Endothelial cell of umbilical vein (primary cell): ENCODE measurements at regions of chr6 and their contacts with region 1.

Region 1: DNA sequence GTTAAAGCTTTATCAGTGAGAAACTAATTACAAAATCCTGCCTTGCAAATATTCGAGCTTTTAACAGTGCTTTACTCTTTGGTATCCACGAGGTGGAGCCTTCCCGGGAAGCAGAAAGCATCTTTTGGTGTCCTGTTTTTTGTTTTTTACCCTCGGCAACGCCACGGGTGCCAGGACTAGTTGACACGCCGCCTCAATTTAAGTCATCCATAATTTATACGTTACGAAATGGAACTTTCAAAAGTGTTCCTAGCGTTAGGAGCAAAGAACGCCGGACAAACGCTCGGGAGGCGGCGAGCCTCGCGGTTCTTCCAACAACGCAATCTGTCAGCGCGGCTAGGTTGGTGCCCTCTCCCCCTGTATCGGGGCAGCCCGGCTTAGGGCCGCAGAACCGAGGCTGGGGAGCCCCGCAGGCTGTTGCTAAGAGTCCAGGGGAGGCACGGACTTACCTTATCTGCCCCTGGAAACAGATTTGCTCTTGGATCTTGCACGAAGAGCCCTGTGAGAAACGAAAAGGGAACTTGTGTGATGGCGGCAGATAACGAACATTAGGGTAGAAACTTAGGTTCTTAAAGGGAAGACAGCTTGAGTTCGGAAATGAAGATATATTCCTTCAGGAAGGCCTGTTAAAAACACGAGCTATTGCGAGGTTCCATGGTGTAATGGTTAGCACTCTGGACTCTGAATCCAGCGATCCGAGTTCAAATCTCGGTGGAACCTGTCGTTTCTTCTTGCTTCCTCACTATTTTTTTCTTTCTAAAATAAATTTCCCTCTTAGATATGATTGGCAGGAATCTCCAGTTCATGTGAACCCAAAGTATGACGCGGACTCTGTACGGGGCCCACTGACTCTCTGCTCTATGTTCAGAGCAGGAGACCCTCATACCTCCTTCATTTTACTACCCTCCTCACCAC is 46.2 kb upstream of the ZNF184 start:
- DNase-seq: peak; percentile 93
- H3K4me3 ChIP-seq: peak overlapping the region; percentile 47 to 74 (median 61)
- H3K27ac ChIP-seq: peak overlapping the region; percentile 27
- H3K4me1 ChIP-seq: peaks cover 3% of the 10 kb centered on the region
- H3K27me3 ChIP-seq: peaks cover 19 to 30% of the 10 kb centered on the region in 2 experiments
- CTCF ChIP-seq: peak; percentile 57 to 63
- POLR2A ChIP-seq: no peak

Region 2: GRCh38 chr6:26640806-26641205 is 878.3 kb before region 1 on chr6:
- CTCF ChIA-PET with region 1: no interaction called
- POLR2A ChIA-PET with region 1: no interaction called
- dilution Hi-C with region 1: no loop called
- intact Hi-C with region 1: no loop called
- DNase-seq: no peak
- H3K4me3 ChIP-seq: no peak overlapping the region
- H3K27ac ChIP-seq: no peak overlapping the region
- H3K4me1 ChIP-seq: no peaks in the 10 kb centered on the region
- H3K27me3 ChIP-seq: no peaks in the 10 kb centered on the region
- CTCF ChIP-seq: no peak
- POLR2A ChIP-seq: no peak

Region 3: DNA sequence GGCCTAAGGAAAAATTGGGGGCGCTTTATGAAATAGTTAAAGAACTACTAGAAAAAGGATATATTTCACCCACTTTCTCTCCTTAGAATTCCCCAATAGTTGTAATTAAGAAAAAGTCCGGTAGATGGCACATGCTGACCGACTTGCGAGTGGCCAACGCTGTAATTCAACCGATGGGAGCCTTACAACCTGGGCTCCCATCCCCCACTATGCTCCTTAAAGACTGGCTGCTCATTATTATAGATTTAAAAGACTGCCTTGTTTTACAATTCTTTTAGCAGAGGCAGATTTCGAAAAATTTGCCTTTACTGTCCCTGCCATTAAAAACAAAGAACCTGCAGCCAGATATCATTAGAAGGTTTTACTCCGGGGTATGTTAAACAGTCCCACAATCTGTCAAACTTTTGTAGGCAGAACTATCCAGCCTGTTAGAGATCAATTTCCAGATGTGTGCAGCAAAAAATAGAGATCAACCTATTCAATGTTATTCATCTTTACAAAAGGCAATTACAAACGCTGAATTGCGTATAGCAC is 330.2 kb before region 1 on chr6:
- CTCF ChIA-PET with region 1: interaction called, 4 read pairs
- POLR2A ChIA-PET with region 1: no interaction called
- dilution Hi-C with region 1: no loop called
- intact Hi-C with region 1: loop called (anchors 1 kb)
- DNase-seq: peak; percentile 83
- H3K4me3 ChIP-seq: peak overlapping the region; percentile 59 to 80 (median 66)
- H3K27ac ChIP-seq: peak overlapping the region; percentile 37
- H3K4me1 ChIP-seq: no peaks in the 10 kb centered on the region
- H3K27me3 ChIP-seq: peaks cover 0 to 4% of the 10 kb centered on the region in 2 experiments
- CTCF ChIP-seq: peak; percentile 54 to 55
- POLR2A ChIP-seq: no peak

Region 4: DNA sequence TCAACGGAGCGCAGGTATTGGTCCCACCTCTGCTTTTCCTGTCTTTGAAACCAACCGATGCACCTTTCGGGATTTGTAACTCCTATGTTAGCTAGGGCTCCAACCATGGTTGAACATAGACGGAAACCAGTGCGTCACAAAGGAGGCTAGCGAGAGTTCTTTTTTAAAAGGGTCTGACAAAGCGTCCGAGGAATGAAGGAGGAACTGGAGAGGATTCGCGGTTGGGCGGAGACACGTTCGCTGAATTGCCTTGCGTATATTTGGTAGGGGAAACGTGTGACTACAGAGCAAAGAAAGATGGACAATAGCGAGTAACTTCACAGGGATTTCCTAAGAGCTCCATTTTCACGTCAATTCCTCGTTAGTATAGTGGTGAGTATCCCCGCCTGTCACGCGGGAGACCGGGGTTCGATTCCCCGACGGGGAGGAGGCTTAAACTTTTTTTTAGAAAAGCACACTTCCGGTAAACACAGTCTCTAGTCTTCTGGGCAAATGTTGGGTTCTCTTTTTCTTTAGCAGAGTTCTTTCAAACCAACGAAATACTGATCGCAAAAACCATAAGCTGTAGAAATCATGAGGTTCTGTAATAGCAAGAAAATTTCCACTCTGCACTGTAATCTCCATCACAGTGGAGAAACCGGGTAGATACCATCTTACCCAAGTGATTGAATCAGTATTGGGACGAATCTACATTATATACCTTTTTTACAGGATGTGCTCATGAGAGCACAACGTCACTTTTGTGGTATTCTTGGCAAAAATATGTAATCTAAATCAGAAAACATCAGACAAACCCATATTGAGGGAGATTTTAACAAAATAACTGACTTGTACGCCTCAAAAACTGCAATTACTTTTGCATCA is 39.6 kb before region 1 on chr6:
- CTCF ChIA-PET with region 1: interaction called, 8 read pairs
- POLR2A ChIA-PET with region 1: no interaction called
- dilution Hi-C with region 1: no loop called
- intact Hi-C with region 1: loop called (anchors 2 kb)
- DNase-seq: peak; percentile 94
- H3K4me3 ChIP-seq: peak overlapping the region; percentile 78 to 93 (median 88)
- H3K27ac ChIP-seq: peak overlapping the region; percentile 82
- H3K4me1 ChIP-seq: peaks cover 7% of the 10 kb centered on the region
- H3K27me3 ChIP-seq: peaks cover 11 to 16% of the 10 kb centered on the region in 2 experiments
- CTCF ChIP-seq: no peak
- POLR2A ChIP-seq: no peak

Region 5: GRCh38 chr6:27553123-27553904 is 34.2 kb after region 1 on chr6:
- CTCF ChIA-PET with region 1: interaction called, 14 read pairs
- POLR2A ChIA-PET with region 1: no interaction called
- dilution Hi-C with region 1: no loop called
- intact Hi-C with region 1: no loop called
- DNase-seq: peak; percentile 7
- H3K4me3 ChIP-seq: peak overlapping the region in 2 of 3 experiments; percentile 20 to 33
- H3K27ac ChIP-seq: no peak overlapping the region
- H3K4me1 ChIP-seq: peaks cover 1% of the 10 kb centered on the region
- H3K27me3 ChIP-seq: peaks cover 22 to 43% of the 10 kb centered on the region in 2 experiments
- CTCF ChIP-seq: no peak
- POLR2A ChIP-seq: no peak

Region 6: GRCh38 chr6:27617700-27618689 is 98.9 kb after region 1 on chr6:
- CTCF ChIA-PET with region 1: interaction called, 22 read pairs
- POLR2A ChIA-PET with region 1: no interaction called
- dilution Hi-C with region 1: no loop called
- intact Hi-C with region 1: no loop called
- DNase-seq: peak; percentile 40
- H3K4me3 ChIP-seq: peak overlapping the region; percentile 20 to 68 (median 55)
- H3K27ac ChIP-seq: no peak overlapping the region
- H3K4me1 ChIP-seq: peaks cover 7% of the 10 kb centered on the region
- H3K27me3 ChIP-seq: peaks cover 0 to 7% of the 10 kb centered on the region in 2 experiments
- CTCF ChIP-seq: no peak
- POLR2A ChIP-seq: no peak

Region 7: DNA sequence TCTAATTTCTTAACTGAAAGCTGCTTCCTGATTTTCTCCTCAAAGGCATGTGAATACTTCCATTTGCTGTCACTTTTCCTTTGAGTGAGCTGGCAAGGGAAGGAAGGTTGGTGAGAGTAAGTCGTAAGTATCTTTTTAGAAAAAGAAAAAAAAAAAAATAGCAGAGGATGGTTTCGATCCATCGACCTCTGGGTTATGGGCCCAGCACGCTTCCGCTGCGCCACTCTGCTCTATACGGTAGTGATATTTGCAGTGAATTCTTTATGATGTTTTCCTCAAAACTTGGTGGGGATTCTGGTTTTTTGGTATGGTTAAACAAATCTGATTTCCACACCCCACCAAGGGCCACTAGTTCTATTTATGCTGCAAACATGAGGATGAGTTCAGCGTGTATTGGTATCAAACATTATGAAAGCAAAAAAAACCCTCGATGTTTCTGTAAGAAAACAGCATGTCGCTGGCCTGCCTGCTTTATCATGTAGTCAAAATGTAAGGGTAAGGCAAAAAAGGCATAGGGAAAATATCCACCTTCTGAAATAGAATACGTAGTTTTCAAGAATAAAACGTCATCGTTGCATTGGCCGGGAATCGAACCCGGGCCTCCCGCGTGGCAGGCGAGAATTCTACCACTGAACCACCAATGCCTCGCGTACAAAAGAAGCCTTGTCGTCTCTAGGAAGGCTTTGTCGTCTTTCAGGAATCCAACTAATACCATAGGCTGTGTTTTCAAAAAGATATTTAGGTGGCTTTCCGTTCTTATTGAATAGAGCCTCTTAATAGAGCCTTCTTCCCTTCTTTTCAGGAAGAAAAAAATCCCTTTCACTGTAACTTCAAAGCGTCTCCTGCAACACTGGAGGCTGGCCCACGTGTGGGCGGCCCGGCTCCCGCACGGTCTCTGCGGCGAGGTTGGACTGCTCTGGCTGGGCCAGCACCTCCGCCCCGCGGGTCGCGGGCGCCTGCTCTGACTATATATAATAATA is 383.5 kb after region 1 on chr6:
- CTCF ChIA-PET with region 1: interaction called, 4 read pairs
- POLR2A ChIA-PET with region 1: no interaction called
- dilution Hi-C with region 1: no loop called
- intact Hi-C with region 1: loop called (anchors 1 kb)
- DNase-seq: peak; percentile 92
- H3K4me3 ChIP-seq: peak overlapping the region; percentile 39 to 91 (median 86)
- H3K27ac ChIP-seq: peak overlapping the region; percentile 37
- H3K4me1 ChIP-seq: no peaks in the 10 kb centered on the region
- H3K27me3 ChIP-seq: peaks cover 0 to 11% of the 10 kb centered on the region in 2 experiments
- CTCF ChIP-seq: no peak
- POLR2A ChIP-seq: no peak